GM10248 (cell line): ENCODE measurements at regions of chr4 and their contacts with region 1.

Region 1: GRCh38 chr4:77358315-77358928 is 201.4 kb downstream of the CCNG2 start:
- DNase-seq: peak; percentile 40
- CTCF ChIP-seq: peak; percentile 66

Region 2: GRCh38 chr4:77226939-77227705 is 131.3 kb before region 1 on chr4:
- CTCF ChIA-PET with region 1: interaction called, 12 read pairs
- POLR2A ChIA-PET with region 1: no interaction called
- DNase-seq: no peak
- CTCF ChIP-seq: no peak

Region 3: DNA sequence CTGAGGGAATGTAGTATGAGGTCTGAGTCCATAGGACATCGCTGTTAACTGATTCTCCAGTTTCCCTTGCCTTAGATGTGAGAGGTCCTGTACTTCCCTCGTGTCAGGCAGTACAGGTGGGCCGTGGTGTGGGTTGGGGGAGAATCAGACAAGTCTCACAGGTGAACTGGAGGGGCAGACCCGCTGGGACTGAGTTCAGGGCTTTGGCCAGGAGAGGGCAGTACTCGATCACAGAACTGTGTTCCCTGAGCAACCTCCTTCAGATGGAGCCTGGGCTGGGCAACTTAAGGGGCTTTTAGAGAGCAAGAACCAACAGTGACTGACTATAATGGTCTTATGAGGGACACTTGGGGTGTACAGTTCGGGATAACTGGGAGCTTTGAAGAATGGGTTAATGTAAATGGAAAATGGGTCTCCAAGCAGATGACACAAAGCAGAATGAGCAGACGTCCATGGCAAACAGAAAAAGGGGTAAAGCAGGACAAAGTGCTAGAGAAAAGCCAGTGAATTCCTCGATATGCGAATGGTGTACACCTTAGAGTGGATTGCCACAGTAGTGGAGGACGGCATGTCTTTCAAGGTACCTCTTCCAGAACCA is 117.9 kb before region 1 on chr4:
- CTCF ChIA-PET with region 1: interaction called, 109 read pairs
- POLR2A ChIA-PET with region 1: no interaction called
- DNase-seq: peak; percentile 63
- CTCF ChIP-seq: peak; percentile 87

Region 4: GRCh38 chr4:77248810-77249209 is 109.6 kb before region 1 on chr4:
- CTCF ChIA-PET with region 1: interaction called, 60 read pairs
- POLR2A ChIA-PET with region 1: no interaction called
- DNase-seq: no peak
- CTCF ChIP-seq: no peak

Region 5: DNA sequence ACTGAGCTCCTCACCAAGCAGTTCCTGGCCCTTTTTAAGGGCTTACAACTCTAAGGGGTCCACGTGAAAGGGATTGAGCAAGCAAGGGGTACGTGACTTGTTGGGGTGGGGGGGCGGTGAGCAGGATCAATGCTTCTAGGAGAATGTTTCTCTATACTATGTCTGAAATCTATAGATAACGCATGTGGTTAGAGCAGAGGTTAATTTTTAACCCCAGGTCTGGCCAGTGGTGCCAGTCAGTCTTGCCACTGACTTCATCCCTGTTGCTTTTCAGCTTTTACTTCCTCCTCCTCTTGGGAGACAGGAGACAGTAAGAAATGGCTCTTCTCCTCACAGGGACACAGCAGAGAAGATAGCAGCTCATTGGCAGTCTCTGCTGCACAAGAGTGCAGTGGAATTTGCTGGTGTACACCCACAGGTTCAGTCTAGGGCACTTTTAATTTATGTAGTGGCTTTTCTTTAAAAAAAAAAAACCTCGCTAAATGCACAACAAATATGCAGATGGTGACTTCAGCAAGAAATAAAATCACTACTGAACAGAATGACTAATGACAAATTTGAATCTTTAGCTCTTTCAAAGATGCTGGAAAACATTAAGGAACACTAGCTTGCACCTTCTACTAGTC is 11.0 kb before region 1 on chr4:
- CTCF ChIA-PET with region 1: interaction called, 30 read pairs
- POLR2A ChIA-PET with region 1: no interaction called
- DNase-seq: no peak
- CTCF ChIP-seq: no peak

Region 6: GRCh38 chr4:77385124-77385969 is 26.9 kb after region 1 on chr4:
- CTCF ChIA-PET with region 1: interaction called, 11 read pairs
- POLR2A ChIA-PET with region 1: no interaction called
- DNase-seq: peak; percentile 48
- CTCF ChIP-seq: peak; percentile 80